Right ventricle myocardium inferior (tissue), 1 donor: ENCODE measurements at regions of chr17 and their contacts with region 1.

Region 1: DNA sequence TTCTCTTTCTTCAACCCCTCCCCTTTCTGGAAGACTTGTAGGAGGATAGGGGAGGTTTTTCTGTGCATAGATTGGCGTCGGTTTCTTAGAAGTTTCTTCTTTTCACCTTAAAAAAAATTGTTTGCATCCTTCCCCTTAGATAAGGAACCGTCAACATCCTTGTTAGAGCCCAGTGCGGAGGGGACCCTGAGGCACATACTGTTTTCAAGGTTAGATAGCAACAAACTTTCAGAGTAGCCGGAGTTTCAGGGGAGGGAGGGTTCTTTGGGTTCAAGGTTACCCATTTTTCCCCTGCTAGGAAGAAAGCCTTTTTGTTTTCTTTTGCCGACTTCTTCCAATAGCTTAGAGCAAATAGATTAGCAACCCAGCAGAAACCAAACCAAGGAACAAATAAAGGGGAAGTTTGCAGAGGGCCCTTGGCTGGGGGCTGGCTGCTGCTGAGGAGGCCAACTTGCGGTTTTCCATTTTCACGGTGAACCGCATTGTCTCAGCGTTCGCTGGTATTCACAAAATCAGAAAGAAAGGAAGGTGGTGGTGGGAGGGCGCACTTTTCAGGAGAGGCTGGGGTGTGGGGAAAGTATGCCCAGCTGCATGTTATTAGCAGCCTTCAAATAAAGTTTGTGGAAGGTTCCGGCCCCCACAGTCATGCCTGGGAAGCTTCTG is 28.8 kb downstream of the MSI2 start:
- DNase-seq: no peak
- ATAC-seq: no peak

Region 2: GRCh38 chr17:57357399-57357807 is 72.3 kb after region 1 on chr17:
- intact Hi-C with region 1: loop called (anchors 5 kb)
- DNase-seq: peak; percentile 83
- ATAC-seq: peak; percentile 83